Activated CD4-positive, alpha-beta T cell treated with anti-CD3 and anti-CD28 coated beads, Interleukin-2, amount 10 ng/mL, durations not matched to agents 24 days and 14 days (primary cell): ENCODE measurements at regions of chr6 and their contacts with region 1.

Region 1: DNA sequence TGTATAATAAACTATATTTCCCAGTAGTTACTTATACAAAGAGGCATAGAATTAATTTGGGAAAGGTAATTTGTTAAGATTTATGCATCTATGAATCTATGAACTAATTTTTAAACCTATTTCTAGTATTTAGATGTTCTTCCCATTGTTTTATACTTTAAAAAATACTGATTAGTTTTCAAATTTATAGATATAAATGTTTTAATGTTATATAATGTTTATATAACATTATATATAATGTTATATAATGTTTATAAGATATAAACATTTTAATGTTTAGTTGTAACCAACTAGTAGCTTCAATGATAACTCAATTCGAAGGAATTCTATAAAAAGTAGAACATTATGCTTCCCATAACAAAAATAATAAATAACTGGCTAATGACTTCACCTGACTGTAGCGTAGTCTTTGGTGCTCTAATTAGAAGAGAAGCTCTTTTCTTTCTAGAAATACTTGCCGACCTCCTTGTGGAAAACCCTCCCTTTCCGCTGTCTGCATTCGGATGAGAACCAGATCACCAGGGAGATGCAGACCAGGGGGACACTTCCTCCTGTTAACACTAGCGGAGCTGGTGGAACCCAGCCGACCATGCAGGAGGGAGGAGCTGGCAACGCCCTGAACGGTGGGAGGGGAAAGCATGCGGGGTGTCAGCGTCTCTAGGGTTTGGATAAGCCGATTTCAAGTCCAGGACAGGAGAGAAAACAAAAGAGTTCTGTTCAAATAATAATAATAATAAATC is 158.4 kb downstream of the OR2B2 start:
- DNase-seq: peak; percentile 91
- H3K4me3 Mint-ChIP-seq: peak overlapping the region; percentile 86
- H3K27ac Mint-ChIP-seq: peak overlapping the region; percentile 83
- H3K4me1 Mint-ChIP-seq: peaks cover 49% of the 10 kb centered on the region
- H3K27me3 Mint-ChIP-seq: no peaks in the 10 kb centered on the region

Region 2: DNA sequence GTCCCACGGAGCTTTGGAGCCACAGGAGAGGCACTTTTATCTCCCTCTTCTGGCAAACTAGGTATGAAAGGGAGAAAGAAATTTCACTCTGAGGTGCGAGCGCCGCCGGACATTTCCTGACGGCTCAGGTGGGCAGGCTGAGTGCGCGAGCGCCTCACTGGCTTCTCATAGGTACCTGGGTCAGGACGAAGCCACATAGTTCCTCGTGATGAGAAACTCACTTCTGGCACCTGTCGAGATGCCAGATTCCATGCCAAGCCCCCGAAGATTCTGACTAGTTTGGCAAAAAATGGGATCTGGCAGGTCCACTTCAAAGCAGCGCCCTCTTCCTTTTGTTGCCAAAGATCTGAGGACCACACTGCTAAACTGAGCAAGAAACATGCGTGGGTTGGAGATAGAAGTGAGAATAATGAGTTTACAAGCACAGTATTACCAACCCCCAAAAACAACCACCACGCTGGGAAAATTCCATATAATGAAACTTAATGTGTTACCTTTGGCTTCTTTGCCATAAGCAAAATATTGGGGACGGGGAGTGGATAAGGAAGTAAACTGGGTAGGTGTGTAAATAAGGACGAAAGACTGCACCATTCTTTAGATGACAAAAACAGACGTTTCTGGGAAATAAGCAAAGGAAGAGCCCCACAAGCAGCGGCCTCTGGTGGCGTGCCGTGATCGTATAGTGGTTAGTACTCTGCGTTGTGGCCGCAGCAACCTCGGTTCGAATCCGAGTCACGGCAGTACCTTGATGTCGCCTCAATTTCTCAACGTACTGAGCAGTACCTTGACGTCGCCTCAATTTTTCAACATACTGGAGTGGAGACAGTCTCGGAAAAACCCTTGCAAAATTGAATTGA is 596.2 kb before region 1 on chr6:
- intact Hi-C with region 1: loop called (anchors 1 kb)
- DNase-seq: peak; percentile 94
- H3K4me3 Mint-ChIP-seq: peak overlapping the region; percentile 90
- H3K27ac Mint-ChIP-seq: peak overlapping the region; percentile 92
- H3K4me1 Mint-ChIP-seq: peaks cover 45% of the 10 kb centered on the region
- H3K27me3 Mint-ChIP-seq: peaks cover 2% of the 10 kb centered on the region

Region 3: GRCh38 chr6:27472617-27473400 is 281.0 kb before region 1 on chr6 and contains the start of gene ZNF184:
- intact Hi-C with region 1: loop called (anchors 1 kb)
- DNase-seq: peak; percentile 97
- H3K4me3 Mint-ChIP-seq: peak within 1 kb of the TSS; percentile 89
- H3K27ac Mint-ChIP-seq: peak within 1 kb of the TSS; percentile 98
- H3K4me1 Mint-ChIP-seq: peaks cover 41% of the 10 kb centered on the region
- H3K27me3 Mint-ChIP-seq: peaks cover 2% of the 10 kb centered on the region
- total RNA-seq, gene ZNF184: 7.9 and 8.2 TPM in 2 replicates

Region 4: DNA sequence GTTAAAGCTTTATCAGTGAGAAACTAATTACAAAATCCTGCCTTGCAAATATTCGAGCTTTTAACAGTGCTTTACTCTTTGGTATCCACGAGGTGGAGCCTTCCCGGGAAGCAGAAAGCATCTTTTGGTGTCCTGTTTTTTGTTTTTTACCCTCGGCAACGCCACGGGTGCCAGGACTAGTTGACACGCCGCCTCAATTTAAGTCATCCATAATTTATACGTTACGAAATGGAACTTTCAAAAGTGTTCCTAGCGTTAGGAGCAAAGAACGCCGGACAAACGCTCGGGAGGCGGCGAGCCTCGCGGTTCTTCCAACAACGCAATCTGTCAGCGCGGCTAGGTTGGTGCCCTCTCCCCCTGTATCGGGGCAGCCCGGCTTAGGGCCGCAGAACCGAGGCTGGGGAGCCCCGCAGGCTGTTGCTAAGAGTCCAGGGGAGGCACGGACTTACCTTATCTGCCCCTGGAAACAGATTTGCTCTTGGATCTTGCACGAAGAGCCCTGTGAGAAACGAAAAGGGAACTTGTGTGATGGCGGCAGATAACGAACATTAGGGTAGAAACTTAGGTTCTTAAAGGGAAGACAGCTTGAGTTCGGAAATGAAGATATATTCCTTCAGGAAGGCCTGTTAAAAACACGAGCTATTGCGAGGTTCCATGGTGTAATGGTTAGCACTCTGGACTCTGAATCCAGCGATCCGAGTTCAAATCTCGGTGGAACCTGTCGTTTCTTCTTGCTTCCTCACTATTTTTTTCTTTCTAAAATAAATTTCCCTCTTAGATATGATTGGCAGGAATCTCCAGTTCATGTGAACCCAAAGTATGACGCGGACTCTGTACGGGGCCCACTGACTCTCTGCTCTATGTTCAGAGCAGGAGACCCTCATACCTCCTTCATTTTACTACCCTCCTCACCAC is 234.7 kb before region 1 on chr6:
- intact Hi-C with region 1: loop called (anchors 1 kb)
- DNase-seq: peak; percentile 84
- H3K4me3 Mint-ChIP-seq: peak overlapping the region; percentile 93
- H3K27ac Mint-ChIP-seq: peak overlapping the region; percentile 85
- H3K4me1 Mint-ChIP-seq: peaks cover 13% of the 10 kb centered on the region
- H3K27me3 Mint-ChIP-seq: peaks cover 33% of the 10 kb centered on the region

Region 5: GRCh38 chr6:27687154-27688013 is 66.5 kb before region 1 on chr6:
- intact Hi-C with region 1: loop called (anchors 1 kb)
- DNase-seq: peak; percentile 92
- H3K4me3 Mint-ChIP-seq: peak overlapping the region; percentile 91
- H3K27ac Mint-ChIP-seq: peak overlapping the region; percentile 86
- H3K4me1 Mint-ChIP-seq: peaks cover 18% of the 10 kb centered on the region
- H3K27me3 Mint-ChIP-seq: peaks cover 21% of the 10 kb centered on the region

Region 6: DNA sequence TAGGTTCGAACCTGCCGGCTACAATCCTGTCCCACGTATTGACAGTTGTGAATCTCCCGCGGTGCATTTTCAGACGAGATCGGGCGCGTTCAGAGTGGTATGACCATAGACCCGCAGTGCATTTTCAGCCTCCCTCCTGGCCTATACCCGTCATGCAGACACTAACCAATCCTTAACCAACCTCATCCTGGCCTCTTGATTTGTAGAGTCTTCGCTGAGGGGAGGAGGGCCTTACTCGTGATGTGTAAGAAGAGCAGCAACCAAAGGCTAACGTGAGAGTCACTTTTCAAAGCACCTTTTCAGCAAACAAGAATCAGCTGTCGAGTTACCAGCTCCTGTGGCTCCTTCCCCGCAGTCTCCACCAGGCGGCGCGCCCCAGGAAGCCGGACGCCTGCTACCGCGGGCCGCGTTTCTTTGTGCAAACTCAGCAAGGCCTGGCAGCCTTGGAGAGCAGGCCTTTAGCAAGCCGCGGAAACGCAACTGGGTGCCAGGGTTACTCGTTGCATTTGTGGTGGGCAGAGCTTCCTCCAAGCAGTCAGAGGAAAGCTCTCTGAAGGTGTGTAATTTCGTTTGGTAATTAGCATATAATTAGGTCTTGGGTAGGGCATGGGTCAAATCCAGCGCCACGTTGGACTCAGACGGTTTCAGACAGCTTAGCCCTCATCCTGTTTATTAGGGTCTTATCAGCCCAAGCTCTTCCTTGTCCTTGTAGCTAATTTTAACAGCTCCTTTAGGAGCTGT is 18.6 kb after region 1 on chr6:
- intact Hi-C with region 1: loop called (anchors 1 kb)
- DNase-seq: peak; percentile 96
- H3K4me3 Mint-ChIP-seq: peak overlapping the region; percentile 55
- H3K27ac Mint-ChIP-seq: peak overlapping the region; percentile 23
- H3K4me1 Mint-ChIP-seq: peaks cover 14% of the 10 kb centered on the region
- H3K27me3 Mint-ChIP-seq: peaks cover 21% of the 10 kb centered on the region

Region 7: GRCh38 chr6:27809939-27810767 is 56.3 kb after region 1 on chr6:
- intact Hi-C with region 1: no loop called
- DNase-seq: peak; percentile 96
- H3K4me3 Mint-ChIP-seq: peak overlapping the region; percentile 87
- H3K27ac Mint-ChIP-seq: peak overlapping the region; percentile 96
- H3K4me1 Mint-ChIP-seq: peaks cover 67% of the 10 kb centered on the region
- H3K27me3 Mint-ChIP-seq: no peaks in the 10 kb centered on the region

Region 8: GRCh38 chr6:28981833-28982475 is 1228.1 kb after region 1 on chr6:
- intact Hi-C with region 1: loop called (anchors 1 kb)
- DNase-seq: peak; percentile 91
- H3K4me3 Mint-ChIP-seq: peak overlapping the region; percentile 92
- H3K27ac Mint-ChIP-seq: peak overlapping the region; percentile 95
- H3K4me1 Mint-ChIP-seq: peaks cover 56% of the 10 kb centered on the region
- H3K27me3 Mint-ChIP-seq: peaks cover 38% of the 10 kb centered on the region